Naive thymus-derived CD8-positive, alpha-beta T cell (primary cell): ENCODE measurements at regions of chr18 and their contacts with region 1.

Region 1: DNA sequence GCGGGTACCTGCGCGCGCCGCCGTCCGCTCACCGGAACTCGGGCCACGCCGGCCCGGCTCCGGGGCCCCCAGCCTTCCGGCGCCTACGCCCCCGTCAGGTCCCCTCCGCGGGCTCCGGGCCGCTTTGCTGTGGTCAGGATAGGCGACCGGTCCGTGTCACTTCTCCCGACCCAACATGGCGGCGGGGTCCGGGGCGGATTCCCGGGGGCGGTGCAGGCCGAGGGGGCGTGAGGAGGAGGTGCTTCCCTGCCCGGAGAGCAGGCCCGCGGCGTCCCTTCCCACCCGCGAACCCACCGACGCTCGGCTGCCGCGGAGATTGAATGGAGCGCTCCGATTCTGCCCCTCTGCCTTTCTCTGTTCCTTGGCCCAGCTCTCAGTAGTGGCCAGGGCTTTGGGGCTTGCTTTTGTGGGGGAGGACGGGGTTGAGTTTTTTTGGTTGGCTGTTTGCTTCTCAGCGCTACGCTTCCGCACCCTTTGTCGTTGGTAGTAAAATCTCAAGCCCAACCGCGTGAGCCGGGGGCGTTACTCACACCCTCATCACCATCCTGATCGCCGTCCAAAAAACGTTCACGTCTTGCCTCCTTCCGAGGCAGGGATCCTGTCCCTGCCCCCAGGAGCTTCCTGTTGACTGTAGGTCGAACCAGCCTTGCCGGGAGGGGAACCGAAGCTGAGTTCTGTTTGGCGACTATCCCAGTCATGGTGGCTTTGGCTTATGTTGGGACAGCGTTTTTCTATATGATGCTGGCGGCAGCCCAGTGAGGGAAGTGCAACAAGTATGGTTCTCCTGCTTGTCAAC is 532 bp upstream of the YES1 start:
- DNase-seq: peak; percentile 61 to 93 (median 82)
- ATAC-seq: peak; percentile 71 to 73
- H3K4me3 Mint-ChIP-seq: peak overlapping the region; percentile 82 to 98 (median 94)
- H3K27ac Mint-ChIP-seq: peak overlapping the region; percentile 96 to 100 (median 98)
- H3K4me1 Mint-ChIP-seq: peaks cover 31 to 72% (median 68%) of the 10 kb centered on the region in 4 donors
- H3K27me3 Mint-ChIP-seq: peaks cover 0 to 3% (median 0%) of the 10 kb centered on the region in 5 donors

Region 2: DNA sequence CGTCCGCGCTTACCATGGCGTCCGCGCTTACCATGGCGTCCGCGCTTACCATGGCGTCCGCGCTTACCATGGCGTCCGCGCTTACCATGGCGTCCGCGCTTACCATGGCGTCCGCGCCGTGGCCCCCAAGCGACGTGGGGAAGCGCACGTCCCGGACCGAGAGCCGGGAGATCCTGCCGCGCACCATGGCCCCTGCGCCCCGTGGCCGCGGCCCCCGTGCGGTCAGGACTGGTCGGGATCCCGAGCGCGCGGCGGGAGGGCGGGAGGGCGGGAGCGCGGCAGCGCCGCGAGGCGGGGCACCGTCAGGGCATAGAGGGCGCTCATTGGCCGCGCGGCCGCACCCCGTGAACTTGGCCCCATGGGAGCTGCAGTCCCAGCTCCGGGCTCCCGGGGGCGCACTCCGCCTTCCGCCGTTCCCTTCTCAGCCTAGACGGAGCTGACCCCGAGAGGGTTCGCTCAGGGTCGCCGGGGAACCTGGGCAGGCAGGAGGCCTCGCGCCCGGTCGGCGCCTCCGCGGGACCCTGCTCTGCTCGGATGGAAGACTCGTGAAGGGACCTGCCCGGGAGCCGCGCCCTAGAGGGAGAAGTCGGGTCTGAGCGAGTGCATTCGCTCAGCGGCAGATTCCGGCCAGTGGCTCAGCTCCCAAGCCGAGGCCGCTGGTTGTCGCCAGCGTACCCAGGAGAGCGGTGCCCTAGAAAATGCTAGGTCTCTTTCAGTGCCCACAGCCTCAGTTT is 100.0 kb before region 1 on chr18 and contains the start of gene ENOSF1:
- POLR2A ChIA-PET with region 1: interaction called, 20 read pairs
- DNase-seq: peak; percentile 64 to 88 (median 80)
- ATAC-seq: peak; percentile 77 to 82
- H3K4me3 Mint-ChIP-seq: peak within 1 kb of the TSS; percentile 83 to 97 (median 91)
- H3K27ac Mint-ChIP-seq: peak within 1 kb of the TSS; percentile 93 to 99 (median 97)
- H3K4me1 Mint-ChIP-seq: peaks cover 18 to 39% (median 30%) of the 10 kb centered on the region in 4 donors
- H3K27me3 Mint-ChIP-seq: peaks cover 0 to 2% (median 0%) of the 10 kb centered on the region in 5 donors
- polyA plus RNA-seq, gene ENOSF1: 8.2 to 13.8 (median 12.7) TPM

Region 3: DNA sequence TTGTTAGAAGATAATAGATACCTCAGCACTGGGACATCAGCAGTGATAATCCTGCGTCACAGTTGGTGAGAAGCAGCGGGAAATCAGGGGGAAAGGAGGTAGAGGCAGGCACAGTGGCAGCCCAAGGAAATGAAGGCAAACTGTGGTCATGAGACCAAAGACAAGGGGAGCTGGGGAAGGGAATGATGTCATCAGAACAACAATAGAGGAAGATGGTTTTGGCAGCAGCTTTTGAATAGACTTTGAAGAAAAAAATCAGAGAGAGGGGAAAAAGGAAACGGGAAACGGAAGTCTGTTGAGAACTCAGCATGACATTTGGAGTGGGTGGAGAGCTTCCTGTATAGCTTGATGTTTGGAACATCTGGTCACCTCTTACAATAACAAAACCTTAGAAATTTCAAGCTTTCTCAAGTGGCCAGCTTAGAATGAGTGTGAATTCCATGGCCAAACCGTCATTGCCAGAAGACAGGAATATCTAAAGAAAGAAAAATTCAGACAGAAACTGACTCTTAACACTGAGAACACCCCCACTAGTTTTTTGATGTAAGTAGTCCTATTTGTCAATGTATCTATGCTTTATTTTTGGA is 17.8 kb after region 1 on chr18:
- POLR2A ChIA-PET with region 1: interaction called, 42 read pairs
- DNase-seq: peak in 8 of 10 donors; percentile 48 to 84 (median 68)
- ATAC-seq: peak; percentile 89
- H3K4me3 Mint-ChIP-seq: peak overlapping the region; percentile 5 to 79 (median 64)
- H3K27ac Mint-ChIP-seq: peak overlapping the region; percentile 24 to 94 (median 86)
- H3K4me1 Mint-ChIP-seq: peaks cover 14 to 34% (median 26%) of the 10 kb centered on the region in 4 donors
- H3K27me3 Mint-ChIP-seq: peaks cover 0 to 12% (median 0%) of the 10 kb centered on the region in 5 donors

Region 4: GRCh38 chr18:892316-892715 is 79.7 kb after region 1 on chr18:
- POLR2A ChIA-PET with region 1: no interaction called
- DNase-seq: no peak
- ATAC-seq: no peak
- H3K4me3 Mint-ChIP-seq: no peak overlapping the region
- H3K27ac Mint-ChIP-seq: no peak overlapping the region
- H3K4me1 Mint-ChIP-seq: no peaks in the 10 kb centered on the region
- H3K27me3 Mint-ChIP-seq: peaks cover 5 to 17% (median 15%) of the 10 kb centered on the region in 5 donors